ENCODE measurements at regions of chr19 and their contacts with region 1.

Region 1: DNA sequence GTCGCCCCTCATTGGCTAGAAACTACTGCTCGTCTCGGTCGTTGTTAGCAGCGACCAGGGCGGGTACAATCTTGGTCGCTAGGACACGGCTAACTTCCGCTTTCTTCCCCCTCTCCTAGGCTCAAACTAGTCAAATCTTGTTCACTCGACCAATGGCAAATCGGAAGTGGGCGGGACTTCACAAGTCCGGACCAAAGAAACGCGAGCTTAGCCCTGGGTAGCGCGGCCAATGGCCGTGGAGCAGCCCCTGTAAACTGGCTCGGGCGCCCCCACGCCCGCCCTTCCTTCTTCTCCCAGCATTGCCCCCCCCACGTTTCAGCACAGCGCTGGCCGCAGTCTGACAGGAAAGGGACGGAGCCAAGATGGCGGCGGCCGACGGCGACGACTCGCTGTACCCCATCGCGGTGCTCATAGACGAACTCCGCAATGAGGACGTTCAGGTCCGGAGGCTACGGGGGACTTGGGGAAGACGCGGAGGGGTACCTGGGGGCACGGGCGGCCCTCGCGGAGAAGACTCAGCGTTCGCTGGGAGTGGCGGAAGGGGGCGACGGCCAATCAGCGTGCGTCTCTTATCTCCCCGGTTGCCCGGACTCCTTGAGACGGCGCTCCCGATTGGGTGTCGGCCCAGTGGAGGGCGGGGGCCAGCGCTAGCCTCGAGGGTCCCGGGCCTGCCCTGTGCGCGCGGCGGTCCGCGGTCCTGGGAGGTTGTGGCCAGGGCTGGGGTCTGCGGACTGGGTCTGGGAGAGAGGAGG is at the start of gene PPP2R1A:
- DNase-seq: peak; percentile 100
- H3K4me3 ChIP-seq: peak within 1 kb of the TSS; percentile 74 to 95 (median 95)
- H3K27ac ChIP-seq: peak within 1 kb of the TSS; percentile 97
- H3K4me1 ChIP-seq: peaks cover 16% of the 10 kb centered on the region
- H3K27me3 ChIP-seq: no peaks in the 10 kb centered on the region
- CTCF ChIP-seq: no peak
- POLR2A ChIP-seq: peak; percentile 61
- total RNA-seq, gene PPP2R1A: 253 and 257 TPM in 2 replicates

Region 2: GRCh38 chr19:52028027-52028779 is 161.7 kb before region 1 on chr19 and contains the start of gene ZNF614:
- CTCF ChIA-PET with region 1: no interaction called
- POLR2A ChIA-PET with region 1: interaction called, 3 read pairs
- dilution Hi-C with region 1: no loop called
- intact Hi-C with region 1: loop called (anchors 5 kb)
- DNase-seq: peak; percentile 92
- H3K4me3 ChIP-seq: peak within 1 kb of the TSS; percentile 59 to 90 (median 87)
- H3K27ac ChIP-seq: peak within 1 kb of the TSS; percentile 93
- H3K4me1 ChIP-seq: peaks cover 6% of the 10 kb centered on the region
- H3K27me3 ChIP-seq: no peaks in the 10 kb centered on the region
- CTCF ChIP-seq: no peak
- POLR2A ChIP-seq: peak; percentile 86
- total RNA-seq, gene ZNF614: 5.6 and 7.8 TPM in 2 replicates

Region 3: DNA sequence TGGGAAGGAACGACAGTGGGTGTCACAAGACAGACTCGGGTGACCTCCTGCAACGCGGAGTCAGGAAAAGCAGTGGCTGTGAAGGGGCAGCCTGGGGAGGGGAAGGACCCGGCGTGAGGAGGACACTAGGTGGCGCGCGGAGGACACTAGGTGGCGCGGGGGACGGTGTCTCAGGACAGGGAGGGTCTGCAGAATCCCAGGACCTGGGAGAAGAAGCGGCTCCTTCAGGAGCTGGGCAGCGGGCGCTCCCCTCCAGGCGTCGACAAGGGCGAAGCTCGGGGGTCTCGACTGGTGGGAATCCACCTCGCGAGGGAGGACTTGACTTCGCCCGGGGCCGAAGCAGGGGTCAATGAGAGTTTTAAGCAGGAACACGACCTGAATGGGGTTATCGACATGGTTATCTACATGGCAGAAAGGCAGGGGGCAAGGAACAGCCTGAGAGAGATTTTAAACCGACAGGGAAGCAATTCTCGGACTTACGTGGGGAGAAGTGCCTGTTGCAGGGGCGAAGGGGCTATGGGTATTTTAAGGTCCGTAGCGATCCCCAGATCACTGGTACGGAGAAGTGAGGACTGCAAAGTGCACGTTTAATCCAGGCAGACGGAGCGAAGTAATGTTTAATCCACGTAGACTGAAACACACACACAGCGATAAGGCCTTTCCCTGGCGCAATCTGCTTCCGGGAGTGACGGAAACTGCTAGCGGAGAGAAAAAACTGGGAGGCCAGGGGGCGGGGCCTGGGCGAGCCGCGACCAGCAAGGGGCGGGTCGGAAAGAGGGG is 50.5 kb before region 1 on chr19 and contains the start of gene ZNF616:
- CTCF ChIA-PET with region 1: interaction called, 20 read pairs
- POLR2A ChIA-PET with region 1: no interaction called
- dilution Hi-C with region 1: no loop called
- intact Hi-C with region 1: loop called (anchors 1 kb)
- DNase-seq: peak; percentile 95
- H3K4me3 ChIP-seq: peak within 1 kb of the TSS; percentile 55 to 88 (median 72)
- H3K27ac ChIP-seq: peak within 1 kb of the TSS; percentile 66
- H3K4me1 ChIP-seq: peaks cover 6% of the 10 kb centered on the region
- H3K27me3 ChIP-seq: no peaks in the 10 kb centered on the region
- CTCF ChIP-seq: peak; percentile 59 to 77
- POLR2A ChIP-seq: peak; percentile 78
- total RNA-seq, gene ZNF616: 8.7 and 9.1 TPM in 2 replicates

Region 4: GRCh38 chr19:52200044-52200443 is 10.1 kb after region 1 on chr19:
- CTCF ChIA-PET with region 1: no interaction called
- POLR2A ChIA-PET with region 1: interaction called, 20 read pairs
- dilution Hi-C with region 1: no loop called
- intact Hi-C with region 1: no loop called
- DNase-seq: peak; percentile 31
- H3K4me3 ChIP-seq: no peak overlapping the region
- H3K27ac ChIP-seq: peak overlapping the region; percentile 34
- H3K4me1 ChIP-seq: peaks cover 5% of the 10 kb centered on the region
- H3K27me3 ChIP-seq: no peaks in the 10 kb centered on the region
- CTCF ChIP-seq: no peak
- POLR2A ChIP-seq: no peak

Region 5: DNA sequence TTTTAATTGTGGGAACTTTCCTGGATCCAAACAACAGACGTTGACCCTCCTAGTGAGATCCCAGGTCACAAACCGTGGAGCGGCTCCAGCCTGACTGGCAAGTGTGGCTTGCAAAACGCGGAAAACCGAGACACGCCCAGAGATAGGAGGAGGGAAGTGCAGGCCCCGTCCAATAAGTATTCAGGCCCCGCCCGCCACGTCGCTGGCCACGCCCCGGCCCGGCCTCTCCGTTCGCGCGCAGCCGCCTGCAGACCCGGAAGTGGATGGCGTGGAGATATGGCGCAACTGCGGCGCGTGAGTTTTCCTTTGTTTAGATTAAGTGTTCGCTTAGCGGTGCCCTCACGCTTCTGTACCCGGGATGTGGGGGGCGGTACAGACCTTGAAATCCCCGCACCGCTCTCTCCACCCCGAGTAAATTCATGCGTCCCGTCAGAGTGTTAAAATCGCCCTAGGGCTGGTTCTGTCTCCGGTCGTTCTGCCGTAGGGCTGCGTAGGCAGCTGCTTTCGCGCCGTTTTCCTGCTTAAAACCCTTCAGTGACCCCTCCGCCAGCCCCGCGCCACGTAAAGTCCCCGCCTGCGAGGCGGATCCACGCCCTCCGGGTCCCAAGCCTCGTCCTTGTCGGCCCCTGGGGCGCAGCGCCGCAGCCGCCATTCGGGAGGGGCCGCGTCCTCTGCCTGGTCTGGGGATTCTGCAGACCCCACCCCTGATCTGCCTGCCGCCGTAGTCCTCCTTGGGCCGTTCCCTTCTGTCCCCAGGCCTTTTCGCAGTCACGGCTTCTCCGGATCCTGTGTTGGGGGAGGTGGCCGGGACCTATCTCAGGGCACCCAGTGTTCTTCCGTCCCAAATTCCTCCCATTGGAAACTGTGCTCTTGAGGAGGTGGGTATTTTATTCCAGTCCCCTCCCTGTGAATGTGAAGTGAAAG is 79.7 kb after region 1 on chr19 and contains the start of gene ZNF766:
- CTCF ChIA-PET with region 1: no interaction called
- POLR2A ChIA-PET with region 1: no interaction called
- dilution Hi-C with region 1: no loop called
- intact Hi-C with region 1: loop called (anchors 1 kb)
- DNase-seq: peak; percentile 95
- H3K4me3 ChIP-seq: peak within 1 kb of the TSS; percentile 89 to 96 (median 94)
- H3K27ac ChIP-seq: peak within 1 kb of the TSS; percentile 96
- H3K4me1 ChIP-seq: peaks cover 6% of the 10 kb centered on the region
- H3K27me3 ChIP-seq: no peaks in the 10 kb centered on the region
- CTCF ChIP-seq: no peak
- POLR2A ChIP-seq: peak; percentile 89
- total RNA-seq, gene ZNF766: 8.9 and 9.1 TPM in 2 replicates